ENCODE measurements at regions of chr20 and their contacts with region 1.

Region 1: DNA sequence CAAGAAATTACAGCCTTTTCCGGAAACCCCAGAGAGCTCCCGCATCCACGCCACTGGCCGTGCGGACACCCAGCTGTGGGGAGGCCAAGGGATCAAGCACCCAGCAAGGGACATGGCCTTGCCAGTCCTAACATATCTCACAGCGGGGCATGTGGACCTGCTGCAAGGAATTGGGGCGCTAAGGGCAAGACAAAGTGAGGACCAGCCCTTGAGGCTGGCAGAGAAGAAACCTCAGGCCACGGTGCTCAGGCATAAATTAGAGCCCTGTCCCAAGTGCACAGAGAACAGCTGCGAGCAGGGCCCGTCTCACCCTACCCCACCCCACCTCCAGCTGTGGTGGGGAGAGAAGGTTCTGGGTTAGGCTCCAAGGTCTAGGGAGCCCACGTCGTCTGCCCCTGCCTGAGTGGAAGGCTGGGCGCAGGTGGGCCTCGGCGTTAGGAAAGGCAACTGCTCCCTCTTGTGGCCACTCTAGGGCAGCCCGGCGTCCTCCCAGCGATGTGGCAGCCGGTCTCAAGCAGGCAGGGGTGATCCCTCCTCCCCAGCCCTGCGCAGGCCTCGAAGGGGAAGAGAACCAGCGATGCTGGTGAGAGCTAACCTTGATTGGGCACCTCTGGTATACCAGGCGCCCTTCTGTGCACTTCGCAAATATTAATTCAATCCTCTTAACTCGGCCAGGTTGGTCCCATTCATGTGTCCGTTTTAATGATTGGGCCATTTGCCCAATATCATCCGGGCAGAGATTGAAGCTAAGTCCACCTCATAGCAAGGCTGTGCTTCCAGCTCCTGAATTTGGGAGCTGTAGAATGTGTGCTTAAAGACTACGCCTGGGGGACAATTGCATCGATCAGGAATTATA is 235.8 kb downstream of the NFATC2 start:
- DNase-seq: no peak
- H3K4me3 ChIP-seq: no peak overlapping the region
- H3K27me3 ChIP-seq: no peaks in the 10 kb centered on the region
- CTCF ChIP-seq: peak; percentile 92

Region 2: GRCh38 chr20:50987592-50988210 is 319.0 kb before region 1 on chr20:
- CTCF ChIA-PET with region 1: interaction called, 340 read pairs
- POLR2A ChIA-PET with region 1: no interaction called
- DNase-seq: peak; percentile 44
- H3K4me3 ChIP-seq: no peak overlapping the region
- H3K27me3 ChIP-seq: no peaks in the 10 kb centered on the region
- CTCF ChIP-seq: peak; percentile 80

Region 3: GRCh38 chr20:51014797-51015722 is 291.7 kb before region 1 on chr20:
- CTCF ChIA-PET with region 1: interaction called, 27 read pairs
- POLR2A ChIA-PET with region 1: no interaction called
- DNase-seq: no peak
- H3K4me3 ChIP-seq: no peak overlapping the region
- H3K27me3 ChIP-seq: no peaks in the 10 kb centered on the region
- CTCF ChIP-seq: peak; percentile 88

Region 4: GRCh38 chr20:51220293-51220706 is 86.4 kb before region 1 on chr20:
- CTCF ChIA-PET with region 1: interaction called, 16 read pairs
- POLR2A ChIA-PET with region 1: no interaction called
- DNase-seq: no peak
- H3K4me3 ChIP-seq: no peak overlapping the region
- H3K27me3 ChIP-seq: peaks cover 13% of the 10 kb centered on the region
- CTCF ChIP-seq: peak; percentile 98

Region 5: DNA sequence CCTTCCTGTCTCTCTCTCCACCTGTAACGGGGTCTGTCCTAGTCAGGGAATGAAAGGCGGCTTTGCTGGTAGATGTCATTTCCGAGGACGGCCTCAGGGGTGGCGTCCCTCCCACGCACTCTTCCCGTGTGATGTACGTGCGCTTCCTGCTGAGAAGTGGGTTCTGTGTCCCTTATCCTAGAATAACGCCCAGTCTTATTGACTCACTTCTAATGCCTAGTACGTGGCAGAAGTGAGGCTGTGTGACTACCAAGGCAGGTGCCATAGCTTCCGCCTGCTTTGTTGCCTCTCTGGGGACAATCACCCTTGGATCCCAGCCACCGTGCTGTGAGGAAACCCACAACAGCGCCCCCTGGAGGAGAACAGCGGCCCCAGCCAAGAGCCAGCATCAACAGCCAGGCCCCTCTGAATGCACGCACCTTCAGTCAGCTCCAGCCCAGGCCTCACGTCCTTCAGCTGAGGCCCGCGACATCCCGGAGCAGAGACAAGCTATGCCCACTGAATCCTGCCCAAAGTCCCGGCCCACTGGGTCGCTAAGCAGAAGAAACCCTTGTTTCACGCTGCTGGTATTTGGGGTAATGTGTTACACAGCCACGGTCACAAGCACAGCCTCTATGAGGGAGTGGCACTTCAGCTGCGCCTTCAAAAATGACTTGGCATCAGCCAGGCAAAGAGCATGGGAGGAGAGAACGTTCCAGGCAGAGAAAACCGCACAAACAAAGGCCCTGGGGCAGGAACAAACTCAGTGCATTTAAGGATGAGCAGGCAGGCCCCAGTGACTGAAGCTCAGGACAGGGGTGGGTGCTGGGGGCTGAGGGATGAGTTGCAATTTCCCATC is 11.5 kb after region 1 on chr20:
- CTCF ChIA-PET with region 1: interaction called, 37 read pairs
- POLR2A ChIA-PET with region 1: no interaction called
- DNase-seq: no peak
- H3K4me3 ChIP-seq: no peak overlapping the region
- H3K27me3 ChIP-seq: no peaks in the 10 kb centered on the region
- CTCF ChIP-seq: peak; percentile 52

Measured in BJ (cell line).